Dorsolateral prefrontal cortex (tissue), 120 donors: ENCODE measurements at regions of chr5 and their contacts with region 1.

Region 1: GRCh38 chr5:95664204-95664786 is 17.7 kb downstream of the RFESD start:
- DNase-seq: peak in 1 of 10 donors; percentile 18
- H3K4me3 ChIP-seq: peak overlapping the region in 9 of 59 donors; percentile 1 to 26 (median 5)
- H3K27ac ChIP-seq: peak overlapping the region in 16 of 59 donors; percentile 1 to 58 (median 25)
- H3K27me3 ChIP-seq: no peaks in the 10 kb centered on the region
- CTCF ChIP-seq: peak; percentile 56 to 95 (median 84)

Region 2: DNA sequence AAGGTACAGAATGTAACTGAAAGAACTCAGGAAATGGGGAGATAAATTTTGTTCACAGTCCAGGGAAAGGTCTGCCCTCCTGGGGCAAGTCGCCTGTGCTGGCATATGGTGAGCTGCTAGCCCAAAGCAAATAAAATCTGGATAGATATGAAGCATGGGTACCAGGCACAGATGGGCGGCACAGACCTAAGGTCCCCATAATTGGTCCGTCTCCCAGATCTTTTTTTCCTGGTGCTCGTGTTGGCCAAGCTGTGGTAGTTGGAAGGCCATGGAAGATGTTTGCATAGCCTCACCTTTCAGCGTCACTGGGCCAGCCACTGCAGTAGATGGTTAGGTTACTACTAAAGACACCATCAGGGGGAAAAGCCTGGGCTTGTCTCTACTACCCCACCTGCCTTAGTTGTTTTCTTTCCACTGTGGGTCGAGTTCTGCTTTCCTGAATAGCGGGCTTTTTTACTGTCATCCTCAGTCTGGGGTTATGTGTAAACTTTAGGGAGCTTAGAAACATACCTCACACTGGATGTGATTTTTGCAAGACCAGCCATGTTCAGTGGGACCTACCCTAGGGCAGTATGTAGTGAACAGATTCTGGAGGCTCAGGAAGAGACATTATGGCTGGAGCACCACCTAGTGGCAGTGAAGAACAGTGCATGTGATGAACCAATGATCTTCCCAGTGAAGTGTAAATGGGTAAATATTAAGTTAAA is 182.4 kb after region 1 on chr5:
- intact Hi-C with region 1: loop called in 1 of 2 experiments (anchors 5 kb)
- DNase-seq: peak in 8 of 10 donors; percentile 61 to 85 (median 78)
- H3K4me3 ChIP-seq: no peak overlapping the region
- H3K27ac ChIP-seq: peak overlapping the region in 29 of 59 donors; percentile 2 to 87 (median 33)
- H3K27me3 ChIP-seq: no peaks in the 10 kb centered on the region
- CTCF ChIP-seq: peak; percentile 95 to 100 (median 98)